Gastrocnemius medialis (tissue), 4 donors: ENCODE measurements at regions of chr14 and their contacts with region 1.

Region 1: DNA sequence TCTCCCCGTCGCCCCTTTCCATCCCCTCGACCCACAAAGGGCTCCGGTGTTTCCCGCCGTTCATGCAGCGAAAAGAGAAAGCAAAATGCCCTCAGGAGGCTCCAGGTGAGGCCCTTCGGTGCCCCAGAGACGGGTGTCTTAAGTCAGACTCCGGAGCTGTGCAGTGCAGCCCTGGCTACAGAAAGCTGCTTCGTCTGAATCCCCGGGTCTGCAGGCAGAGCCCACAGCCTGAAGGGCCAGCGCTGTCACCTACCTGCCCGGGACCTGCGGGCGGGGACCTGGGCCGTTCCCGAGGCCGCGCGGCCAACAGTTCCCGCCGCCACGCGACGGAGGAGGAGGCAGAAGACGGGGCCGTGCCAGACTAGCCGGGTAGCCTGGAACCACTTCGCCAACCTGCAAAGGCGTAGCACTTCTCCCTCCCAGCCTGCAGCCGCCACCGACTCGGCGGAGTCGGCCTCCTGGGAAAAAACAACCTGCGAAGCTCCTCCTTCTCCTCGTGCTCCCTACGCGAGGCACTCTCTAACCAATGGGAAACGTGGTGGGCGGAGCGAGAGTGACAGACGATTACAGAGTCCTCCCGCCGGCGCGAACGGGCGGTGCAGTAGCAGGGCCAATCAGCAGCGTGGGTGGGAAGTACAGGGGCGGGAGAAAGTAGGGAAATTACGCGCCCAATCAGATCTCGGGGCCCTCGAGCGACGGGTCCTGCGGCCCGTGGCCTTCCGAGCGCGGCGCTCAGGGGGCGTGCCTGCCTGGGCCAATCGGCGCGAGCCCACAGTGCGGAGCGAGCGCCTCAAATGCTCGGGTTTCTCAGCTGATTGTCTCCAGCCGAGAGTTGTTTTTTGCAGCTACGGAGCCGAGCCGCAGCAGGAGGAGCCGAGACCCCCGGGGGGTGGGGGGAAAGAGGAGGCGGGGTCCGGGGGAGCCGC is at the starts of genes GPR137C and TXNDC16:
- DNase-seq: peak; percentile 100
- ATAC-seq: peak; percentile 96
- H3K4me3 ChIP-seq: peak within 1 kb of the TSS; percentile 84 to 92 (median 90)
- H3K27ac ChIP-seq: peak within 1 kb of the TSS; percentile 91 to 95 (median 94)
- H3K4me1 ChIP-seq: peaks cover 16 to 19% of the 10 kb centered on the region in 2 donors
- H3K27me3 ChIP-seq: no peaks in the 10 kb centered on the region
- CTCF ChIP-seq: no peak
- POLR2A ChIP-seq: peak; percentile 95 to 99
- total RNA-seq, gene GPR137C: 0.10 to 0.42 (median 0.38) TPM in 3 of 4 donors, not detected in the other
- total RNA-seq, gene TXNDC16: 2.4 to 4.0 (median 2.9) TPM

Region 2: GRCh38 chr14:51989293-51990234 is 562.8 kb before region 1 on chr14 and contains the start of gene RTRAF:
- in situ Hi-C with region 1: no loop called
- intact Hi-C with region 1: loop called (anchors 10 kb)
- DNase-seq: peak; percentile 90 to 91
- ATAC-seq: peak; percentile 96 to 98
- H3K4me3 ChIP-seq: peak within 1 kb of the TSS; percentile 89 to 100 (median 98)
- H3K27ac ChIP-seq: peak within 1 kb of the TSS; percentile 93 to 96 (median 94)
- H3K4me1 ChIP-seq: peaks cover 26 to 27% of the 10 kb centered on the region in 2 donors
- H3K27me3 ChIP-seq: no peaks in the 10 kb centered on the region
- CTCF ChIP-seq: no peak
- POLR2A ChIP-seq: peak; percentile 83 to 89
- total RNA-seq, gene RTRAF: 68.6 to 91.2 (median 78.4) TPM

Region 3: DNA sequence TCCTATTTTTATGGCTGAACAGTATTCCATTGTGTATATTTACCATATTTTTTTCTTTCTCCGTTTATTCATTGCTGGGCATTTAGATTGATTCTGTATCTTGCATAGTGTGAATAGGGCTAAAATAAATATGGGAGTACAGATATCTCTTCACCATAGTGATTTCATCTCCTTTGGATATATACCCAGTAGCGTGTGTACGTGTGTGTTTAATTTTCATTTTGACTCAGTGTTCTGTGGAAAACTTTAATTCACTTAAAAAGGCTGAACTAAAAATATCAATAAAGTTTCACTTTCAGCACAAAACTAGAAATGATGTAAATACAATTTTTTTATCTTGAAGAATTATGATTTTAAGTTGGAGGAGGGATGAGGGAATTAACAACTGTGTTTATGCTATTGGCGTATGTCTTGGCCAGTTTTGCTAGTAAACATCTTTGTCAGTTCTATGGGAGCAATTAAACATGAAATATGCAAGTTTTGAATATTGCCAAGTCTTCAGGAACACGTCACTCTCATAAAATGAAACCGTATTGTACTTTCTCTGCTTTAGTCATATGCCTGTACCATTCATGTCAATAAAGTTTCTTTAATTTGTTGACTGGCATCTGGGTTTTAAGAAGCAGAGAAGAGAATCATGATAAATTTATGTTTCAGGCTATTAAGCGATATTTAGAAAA is 138.5 kb before region 1 on chr14:
- in situ Hi-C with region 1: no loop called
- intact Hi-C with region 1: no loop called
- DNase-seq: no peak
- ATAC-seq: no peak
- H3K4me3 ChIP-seq: no peak overlapping the region
- H3K27ac ChIP-seq: no peak overlapping the region
- H3K4me1 ChIP-seq: no peaks in the 10 kb centered on the region
- H3K27me3 ChIP-seq: no peaks in the 10 kb centered on the region
- CTCF ChIP-seq: no peak
- POLR2A ChIP-seq: no peak

Region 4: GRCh38 chr14:52695481-52696091 is 143.3 kb after region 1 on chr14 and contains the start of gene ERO1A:
- in situ Hi-C with region 1: loop called in 1 of 4 experiments (anchors 10 kb)
- intact Hi-C with region 1: loop called (anchors 1 kb)
- DNase-seq: peak; percentile 79 to 81
- ATAC-seq: peak; percentile 95
- H3K4me3 ChIP-seq: peak within 1 kb of the TSS; percentile 72 to 98 (median 86)
- H3K27ac ChIP-seq: peak within 1 kb of the TSS; percentile 95 to 98 (median 96)
- H3K4me1 ChIP-seq: peaks cover 8 to 19% of the 10 kb centered on the region in 2 donors
- H3K27me3 ChIP-seq: no peaks in the 10 kb centered on the region
- CTCF ChIP-seq: no peak
- POLR2A ChIP-seq: peak; percentile 84
- total RNA-seq, gene ERO1A: 11.9 to 25.6 (median 19.1) TPM

Region 5: DNA sequence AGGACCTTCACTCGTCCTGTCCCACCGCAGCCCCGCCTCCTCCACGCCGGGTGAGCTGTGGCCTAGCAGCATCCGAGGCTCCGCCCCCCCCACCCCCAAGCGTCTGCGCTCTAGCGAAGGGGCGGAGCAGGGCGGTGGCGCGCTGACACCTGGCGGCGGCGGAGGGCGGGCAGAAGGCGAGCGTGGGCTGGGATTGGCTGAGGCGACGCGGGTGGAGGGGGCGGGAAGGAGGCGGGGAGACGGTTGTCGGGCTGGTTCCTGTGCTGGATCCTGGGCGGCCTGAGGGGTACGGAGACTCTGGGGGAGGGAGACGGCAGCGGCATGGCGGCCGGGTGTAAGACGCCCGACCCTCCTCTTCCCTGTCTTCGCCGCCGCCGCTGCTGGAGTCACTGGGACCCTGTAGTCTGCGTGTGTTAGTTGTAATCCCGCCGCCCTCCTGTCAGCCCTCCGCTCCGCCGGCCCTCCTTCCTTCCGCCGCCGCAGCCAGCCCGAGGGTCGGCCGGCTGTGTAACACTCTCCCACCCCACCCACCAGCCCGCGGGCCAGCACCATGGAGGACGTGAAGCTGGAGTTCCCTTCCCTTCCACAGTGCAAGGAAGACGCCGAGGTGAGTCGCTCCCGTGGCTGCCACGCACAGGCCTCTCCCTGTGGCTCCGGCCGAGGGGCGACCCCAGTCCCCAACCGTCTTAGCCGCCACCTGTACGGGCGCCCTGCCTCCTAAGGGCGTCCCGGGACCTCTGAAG is 177.8 kb after region 1 on chr14 and contains the start of gene STYX:
- in situ Hi-C with region 1: no loop called
- intact Hi-C with region 1: loop called (anchors 1 kb)
- DNase-seq: peak; percentile 98
- ATAC-seq: peak; percentile 95 to 97
- H3K4me3 ChIP-seq: peak within 1 kb of the TSS; percentile 72 to 99 (median 92)
- H3K27ac ChIP-seq: peak within 1 kb of the TSS; percentile 90 to 98 (median 94)
- H3K4me1 ChIP-seq: peaks cover 11 to 13% of the 10 kb centered on the region in 2 donors
- H3K27me3 ChIP-seq: no peaks in the 10 kb centered on the region
- CTCF ChIP-seq: peak in 3 of 5 experiments; percentile 17 to 51 (median 47)
- POLR2A ChIP-seq: peak; percentile 80 to 93
- total RNA-seq, gene STYX: 17.1 to 30.7 (median 20.3) TPM

Region 6: GRCh38 chr14:52950898-52951689 is 398.8 kb after region 1 on chr14 and contains the start of gene FERMT2:
- in situ Hi-C with region 1: loop called in 1 of 4 experiments (anchors 25 kb)
- intact Hi-C with region 1: loop called (anchors 5 kb)
- DNase-seq: peak; percentile 73 to 86
- ATAC-seq: peak; percentile 86 to 88
- H3K4me3 ChIP-seq: peak within 1 kb of the TSS; percentile 81 to 98 (median 91)
- H3K27ac ChIP-seq: peak within 1 kb of the TSS; percentile 96 to 99 (median 98)
- H3K4me1 ChIP-seq: peaks cover 30 to 31% of the 10 kb centered on the region in 2 donors
- H3K27me3 ChIP-seq: no peaks in the 10 kb centered on the region
- CTCF ChIP-seq: peak in 1 of 5 experiments; percentile 20
- POLR2A ChIP-seq: peak; percentile 72 to 86
- total RNA-seq, gene FERMT2: 44.0 to 75.9 (median 59.7) TPM